ENCODE measurements at regions of chr2 and their contacts with region 1.

Region 1: GRCh38 chr2:68766376-68766845 is 31.8 kb downstream of the ARHGAP25 start:
- DNase-seq: peak; percentile 92
- H3K4me3 Mint-ChIP-seq: peak overlapping the region; percentile 76
- H3K27ac Mint-ChIP-seq: peak overlapping the region; percentile 95
- H3K4me1 Mint-ChIP-seq: peaks cover 86% of the 10 kb centered on the region
- H3K27me3 Mint-ChIP-seq: no peaks in the 10 kb centered on the region

Region 2: DNA sequence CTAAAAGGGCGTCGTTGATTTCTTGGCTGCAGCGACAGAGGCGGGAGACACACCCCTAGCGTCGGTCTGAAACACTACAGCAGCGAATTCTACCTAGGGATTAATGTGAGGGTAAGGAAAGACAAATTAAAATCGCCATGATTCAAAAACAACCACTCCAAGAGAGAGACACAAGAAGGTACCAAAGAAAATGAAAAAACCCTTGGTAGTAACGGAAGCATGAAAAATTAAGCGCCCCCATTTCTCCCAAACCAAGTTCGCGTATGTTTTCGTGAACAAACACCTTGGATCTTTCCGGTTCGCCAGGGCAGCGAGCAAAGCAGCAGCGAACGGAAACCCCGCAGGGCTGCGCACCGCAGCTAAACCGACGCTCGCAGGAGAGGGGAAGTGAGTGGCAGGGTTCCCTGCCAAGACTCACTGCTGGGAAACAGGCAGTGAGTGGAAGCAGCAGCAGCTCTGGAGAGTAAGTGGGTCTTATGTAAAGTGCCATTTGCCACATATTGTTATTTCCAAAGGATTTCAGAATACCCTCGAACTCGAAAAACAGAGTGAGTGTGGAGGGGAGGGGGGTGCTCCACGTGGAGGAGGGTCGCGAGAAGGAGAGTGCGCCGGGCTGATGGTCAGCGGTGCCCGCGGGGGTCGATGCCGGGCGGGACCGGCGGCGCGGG is 515.1 kb before region 1 on chr2:
- intact Hi-C with region 1: loop called (anchors 5 kb)
- DNase-seq: peak; percentile 92
- H3K4me3 Mint-ChIP-seq: peak overlapping the region; percentile 92
- H3K27ac Mint-ChIP-seq: peak overlapping the region; percentile 99
- H3K4me1 Mint-ChIP-seq: peaks cover 37% of the 10 kb centered on the region
- H3K27me3 Mint-ChIP-seq: peaks cover 4% of the 10 kb centered on the region

Region 3: GRCh38 chr2:68715353-68716041 is 50.9 kb before region 1 on chr2:
- intact Hi-C with region 1: loop called (anchors 1 kb)
- DNase-seq: peak; percentile 75
- H3K4me3 Mint-ChIP-seq: peak overlapping the region; percentile 1
- H3K27ac Mint-ChIP-seq: peak overlapping the region; percentile 75
- H3K4me1 Mint-ChIP-seq: peaks cover 80% of the 10 kb centered on the region
- H3K27me3 Mint-ChIP-seq: no peaks in the 10 kb centered on the region

Region 4: DNA sequence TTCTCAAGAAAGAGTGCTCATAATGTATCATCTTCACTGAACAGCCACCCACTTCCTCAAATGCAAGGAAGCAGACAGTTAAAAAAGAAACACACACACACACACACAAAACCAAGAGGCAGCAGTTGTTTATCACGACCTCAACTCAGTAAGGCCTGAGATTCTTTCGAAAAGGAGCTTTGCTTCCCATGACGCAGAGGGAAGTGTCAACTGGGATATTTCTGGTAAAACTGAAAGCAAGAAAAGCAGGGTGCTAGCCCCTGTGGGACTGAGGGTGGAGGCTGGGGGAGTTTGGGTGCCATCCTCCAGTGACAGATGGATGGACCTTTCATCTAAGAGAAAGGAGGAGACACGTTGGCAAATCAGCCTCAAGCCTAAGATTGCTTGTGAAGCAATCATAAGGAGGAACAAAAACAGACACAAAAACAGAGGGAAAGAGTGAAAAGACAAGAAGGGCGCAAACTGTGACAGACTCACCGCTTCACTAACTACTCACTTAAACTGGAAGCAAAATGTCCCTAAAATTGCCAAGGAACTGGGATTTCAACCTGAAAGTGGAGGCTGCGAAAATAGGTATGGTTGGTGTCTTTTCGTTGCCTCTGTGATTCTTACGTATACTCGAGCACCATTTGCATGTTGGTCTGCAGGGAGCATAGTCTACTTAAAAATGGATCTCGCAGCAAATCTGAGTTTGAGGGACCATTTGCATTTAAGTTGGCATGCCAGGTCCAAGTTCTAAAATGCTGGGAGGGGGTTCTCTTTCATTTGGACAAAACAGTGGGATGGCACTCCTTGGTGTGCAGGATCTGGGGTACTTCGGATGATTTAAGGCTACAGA is 31.5 kb before region 1 on chr2 and contains the start of gene ARHGAP25:
- intact Hi-C with region 1: loop called (anchors 1 kb)
- DNase-seq: peak; percentile 89
- H3K4me3 Mint-ChIP-seq: no peak within 1 kb of the TSS
- H3K27ac Mint-ChIP-seq: no peak within 1 kb of the TSS
- H3K4me1 Mint-ChIP-seq: peaks cover 41% of the 10 kb centered on the region
- H3K27me3 Mint-ChIP-seq: no peaks in the 10 kb centered on the region
- total RNA-seq, gene ARHGAP25: 37.8 and 42.2 TPM in 2 replicates

Region 5: GRCh38 chr2:68751397-68752339 is 14.7 kb before region 1 on chr2:
- intact Hi-C with region 1: loop called (anchors 1 kb)
- DNase-seq: peak; percentile 96
- H3K4me3 Mint-ChIP-seq: peak overlapping the region; percentile 23
- H3K27ac Mint-ChIP-seq: peak overlapping the region; percentile 83
- H3K4me1 Mint-ChIP-seq: peaks cover 73% of the 10 kb centered on the region
- H3K27me3 Mint-ChIP-seq: no peaks in the 10 kb centered on the region

Region 6: DNA sequence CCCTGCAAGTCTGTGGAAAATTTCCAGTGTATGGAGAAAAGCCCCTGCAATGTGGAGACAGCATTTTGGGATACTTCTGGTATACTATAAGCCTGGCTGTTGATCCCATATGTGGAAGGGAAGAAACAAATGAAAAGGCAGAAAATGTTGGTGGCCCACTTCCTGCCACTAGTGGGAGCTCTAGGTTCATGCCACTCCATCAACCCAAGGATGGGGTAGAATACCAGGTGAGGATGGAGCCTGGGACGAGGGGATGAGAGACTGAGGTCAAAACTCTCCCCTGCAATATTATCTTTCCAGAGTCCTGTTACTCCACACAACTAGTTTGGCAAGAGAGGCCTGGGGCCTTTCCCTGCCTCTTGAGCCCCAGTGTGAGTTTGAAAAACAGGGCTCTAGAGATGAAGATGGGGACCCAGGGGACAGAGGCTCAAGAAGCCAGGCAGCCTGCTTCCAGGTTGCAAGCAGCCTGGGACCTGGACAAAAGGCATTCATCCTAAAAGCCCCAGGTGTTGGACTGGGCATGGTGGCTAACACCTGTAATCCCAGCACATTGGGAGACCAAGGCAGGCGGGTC is 72.9 kb after region 1 on chr2:
- intact Hi-C with region 1: loop called (anchors 1 kb)
- DNase-seq: peak; percentile 71
- H3K4me3 Mint-ChIP-seq: no peak overlapping the region
- H3K27ac Mint-ChIP-seq: no peak overlapping the region
- H3K4me1 Mint-ChIP-seq: peaks cover 30% of the 10 kb centered on the region
- H3K27me3 Mint-ChIP-seq: peaks cover 12% of the 10 kb centered on the region

Measured in activated CD4-positive, alpha-beta T cell treated with anti-CD3 and anti-CD28 coated beads, Interleukin-2, amount 10 ng/mL, durations not matched to agents 24 days and 14 days (primary cell).